CD4-positive, alpha-beta memory T cell (primary cell): ENCODE measurements at regions of chr17 and their contacts with region 1.

Region 1: DNA sequence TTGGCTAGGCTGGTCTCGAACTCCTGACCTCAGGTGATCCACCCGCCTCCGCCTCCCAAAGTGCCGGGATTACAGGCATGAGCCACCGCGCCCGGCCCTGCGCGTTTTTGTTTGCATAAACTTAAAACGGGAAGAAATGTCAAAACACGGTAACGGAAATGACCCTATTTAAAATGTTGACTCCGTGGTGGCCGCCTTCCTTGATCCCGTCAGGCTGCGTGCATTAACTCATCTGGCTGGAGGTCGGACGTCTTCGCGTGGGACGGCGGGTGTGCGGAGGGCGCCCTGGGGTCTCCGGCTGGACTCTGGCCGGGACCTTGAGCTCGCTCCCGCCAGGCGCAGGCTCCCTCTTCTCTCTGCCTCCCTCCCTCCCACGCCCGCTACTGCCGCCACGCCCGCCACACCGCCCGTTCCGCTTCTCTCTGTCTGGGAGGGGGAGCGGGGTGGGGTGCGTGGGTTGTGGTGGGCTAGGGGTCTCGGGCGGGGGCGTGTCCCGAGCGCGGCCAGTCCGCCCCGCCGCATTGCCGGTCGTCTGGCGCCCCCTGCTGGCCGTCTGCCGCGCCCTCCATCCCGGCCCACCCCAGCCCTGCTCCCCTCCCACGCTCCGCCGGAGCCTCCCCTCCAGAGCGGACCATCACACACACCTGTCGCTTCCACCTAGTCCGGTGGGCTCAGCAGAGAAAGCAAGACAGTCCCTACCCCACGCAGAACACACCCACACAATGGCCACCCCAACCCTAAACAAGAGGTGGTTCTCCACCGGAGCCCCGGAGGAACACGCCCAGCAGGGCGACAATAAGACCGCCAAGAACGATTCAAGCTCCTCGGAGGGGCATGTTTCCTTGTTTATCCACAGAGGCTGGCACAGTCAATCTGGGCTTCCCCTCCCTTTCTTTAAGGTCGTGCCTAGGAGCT is 1.2 kb upstream of the CCDC42 start:
- DNase-seq: peak; percentile 66 to 78 (median 70)
- H3K4me3 ChIP-seq: peak overlapping the region; percentile 34 to 72
- H3K4me3 Mint-ChIP-seq: peak overlapping the region; percentile 89 to 95 (median 91)
- H3K27ac ChIP-seq: peak overlapping the region; percentile 56
- H3K27ac Mint-ChIP-seq: peak overlapping the region; percentile 87 to 95 (median 91)
- H3K4me1 ChIP-seq: peaks cover 17% of the 10 kb centered on the region
- H3K4me1 Mint-ChIP-seq: peaks cover 9 to 23% (median 12%) of the 10 kb centered on the region in 4 donors
- H3K27me3 ChIP-seq: no peaks in the 10 kb centered on the region
- H3K27me3 Mint-ChIP-seq: no peaks in the 10 kb centered on the region

Region 2: DNA sequence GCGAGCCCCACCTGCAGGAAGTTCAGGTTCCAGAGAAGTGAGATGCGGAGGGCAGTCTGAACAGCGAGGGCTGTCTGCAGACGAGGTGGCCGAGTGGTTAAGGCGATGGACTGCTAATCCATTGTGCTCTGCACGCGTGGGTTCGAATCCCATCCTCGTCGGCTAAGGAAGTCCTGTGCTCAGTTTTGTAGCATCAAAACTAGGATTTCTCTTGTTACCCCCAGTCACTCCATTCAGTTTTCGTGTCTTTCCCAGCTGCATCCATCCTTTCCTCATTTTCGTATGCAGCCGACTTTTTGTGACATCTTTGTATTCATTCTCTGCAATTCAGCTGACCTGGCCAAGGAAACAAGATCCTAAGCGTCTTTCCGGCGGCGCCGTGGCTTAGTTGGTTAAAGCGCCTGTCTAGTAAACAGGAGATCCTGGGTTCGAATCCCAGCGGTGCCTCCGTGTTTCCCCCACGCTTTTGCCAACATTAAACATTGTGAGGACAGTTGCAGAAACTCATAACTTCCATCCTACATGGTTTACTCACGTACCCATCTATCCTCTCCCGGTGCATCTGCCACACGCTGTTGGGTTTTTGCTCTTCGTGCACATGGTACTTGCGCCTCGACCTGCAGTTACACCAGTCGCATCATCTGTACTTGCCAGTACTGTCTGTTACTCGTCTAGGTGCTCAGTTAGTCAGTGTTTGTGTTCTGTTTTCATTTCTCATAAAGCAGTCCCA is 558.9 kb before region 1 on chr17:
- CTCF ChIA-PET with region 1: no interaction called
- POLR2A ChIA-PET with region 1: no interaction called
- intact Hi-C with region 1: no loop called
- DNase-seq: peak; percentile 90 to 92 (median 91)
- H3K4me3 ChIP-seq: peak overlapping the region; percentile 90 to 100
- H3K4me3 Mint-ChIP-seq: no peak overlapping the region
- H3K27ac ChIP-seq: peak overlapping the region; percentile 82
- H3K27ac Mint-ChIP-seq: no peak overlapping the region
- H3K4me1 ChIP-seq: peaks cover 30% of the 10 kb centered on the region
- H3K4me1 Mint-ChIP-seq: peaks cover 16 to 26% (median 17%) of the 10 kb centered on the region in 4 donors
- H3K27me3 ChIP-seq: no peaks in the 10 kb centered on the region
- H3K27me3 Mint-ChIP-seq: no peaks in the 10 kb centered on the region

Region 3: GRCh38 chr17:8383143-8383822 is 362.6 kb before region 1 on chr17 and contains the start of gene RPL26:
- CTCF ChIA-PET with region 1: interaction called, 21 read pairs
- POLR2A ChIA-PET with region 1: interaction called, 8 read pairs
- intact Hi-C with region 1: loop called (anchors 1 kb)
- DNase-seq: peak; percentile 96 to 98 (median 97)
- H3K4me3 ChIP-seq: peak within 1 kb of the TSS; percentile 74 to 95
- H3K4me3 Mint-ChIP-seq: peak within 1 kb of the TSS; percentile 95 to 99 (median 97)
- H3K27ac ChIP-seq: peak within 1 kb of the TSS; percentile 77
- H3K27ac Mint-ChIP-seq: peak within 1 kb of the TSS; percentile 94 to 97 (median 96)
- H3K4me1 ChIP-seq: peaks cover 49% of the 10 kb centered on the region
- H3K4me1 Mint-ChIP-seq: peaks cover 36 to 82% (median 54%) of the 10 kb centered on the region in 4 donors
- H3K27me3 ChIP-seq: no peaks in the 10 kb centered on the region
- H3K27me3 Mint-ChIP-seq: no peaks in the 10 kb centered on the region
- total RNA-seq, gene RPL26: 2,761 to 2,878 TPM

Region 4: DNA sequence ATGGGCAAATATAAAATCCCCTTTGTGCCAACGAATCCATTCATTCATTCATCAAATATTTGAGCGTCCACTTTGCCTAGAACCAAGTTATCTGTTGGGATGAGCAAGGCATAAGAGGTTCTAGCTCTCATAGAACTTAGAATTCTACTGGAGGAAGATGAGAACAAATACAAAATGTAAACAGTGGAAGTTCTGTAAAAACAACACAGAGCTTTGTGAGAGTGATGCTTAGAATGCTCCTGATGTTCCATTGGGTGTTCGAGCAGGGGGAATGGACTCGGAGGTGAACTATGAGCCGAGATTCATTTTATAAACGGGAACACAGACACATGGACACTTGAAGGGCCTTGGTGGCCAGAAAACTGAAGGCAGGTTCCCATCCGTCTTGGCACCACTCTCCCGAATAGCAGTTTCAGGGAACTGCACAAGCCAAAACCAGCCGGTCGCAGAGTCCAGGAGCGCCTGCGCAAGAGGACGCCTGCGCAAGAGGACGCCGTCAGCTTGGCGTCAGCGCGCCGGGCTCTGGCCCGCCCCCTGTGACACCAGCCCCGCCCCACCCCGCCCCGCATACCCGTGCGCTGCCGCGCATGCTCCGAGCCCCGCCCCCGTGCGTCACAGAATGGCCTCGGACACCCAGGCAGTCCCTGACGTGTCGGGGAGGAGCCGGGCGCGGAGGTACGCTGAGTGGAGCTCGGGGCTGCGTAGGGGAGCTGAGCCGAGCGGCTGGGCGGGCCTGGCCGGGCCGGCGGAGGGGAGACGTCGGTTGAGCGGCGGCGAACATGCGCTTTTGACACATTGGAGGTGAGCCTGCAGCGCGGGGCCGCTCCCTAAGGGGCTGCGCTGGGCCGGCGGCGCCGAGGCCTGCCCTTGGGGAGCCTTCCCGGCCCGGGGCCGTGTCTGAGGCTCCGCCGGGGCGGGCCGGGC is 310.3 kb before region 1 on chr17 and contains the start of gene NDEL1:
- CTCF ChIA-PET with region 1: interaction called, 12 read pairs
- POLR2A ChIA-PET with region 1: interaction called, 6 read pairs
- intact Hi-C with region 1: no loop called
- DNase-seq: peak; percentile 98 to 99 (median 98)
- H3K4me3 ChIP-seq: peak within 1 kb of the TSS; percentile 87 to 95
- H3K4me3 Mint-ChIP-seq: peak within 1 kb of the TSS; percentile 94 to 99 (median 98)
- H3K27ac ChIP-seq: peak within 1 kb of the TSS; percentile 100
- H3K27ac Mint-ChIP-seq: peak within 1 kb of the TSS; percentile 96 to 100 (median 99)
- H3K4me1 ChIP-seq: peaks cover 40% of the 10 kb centered on the region
- H3K4me1 Mint-ChIP-seq: peaks cover 19 to 49% (median 31%) of the 10 kb centered on the region in 4 donors
- H3K27me3 ChIP-seq: no peaks in the 10 kb centered on the region
- H3K27me3 Mint-ChIP-seq: no peaks in the 10 kb centered on the region
- total RNA-seq, gene NDEL1: 115 to 120 TPM

Region 5: GRCh38 chr17:8599351-8600011 is 146.4 kb before region 1 on chr17:
- CTCF ChIA-PET with region 1: no interaction called
- POLR2A ChIA-PET with region 1: no interaction called
- intact Hi-C with region 1: no loop called
- DNase-seq: no peak
- H3K4me3 ChIP-seq: no peak overlapping the region
- H3K4me3 Mint-ChIP-seq: no peak overlapping the region
- H3K27ac ChIP-seq: no peak overlapping the region
- H3K27ac Mint-ChIP-seq: no peak overlapping the region
- H3K4me1 ChIP-seq: no peaks in the 10 kb centered on the region
- H3K4me1 Mint-ChIP-seq: no peaks in the 10 kb centered on the region
- H3K27me3 ChIP-seq: no peaks in the 10 kb centered on the region
- H3K27me3 Mint-ChIP-seq: peaks cover 0 to 3% of the 10 kb centered on the region in 2 donors

Region 6: DNA sequence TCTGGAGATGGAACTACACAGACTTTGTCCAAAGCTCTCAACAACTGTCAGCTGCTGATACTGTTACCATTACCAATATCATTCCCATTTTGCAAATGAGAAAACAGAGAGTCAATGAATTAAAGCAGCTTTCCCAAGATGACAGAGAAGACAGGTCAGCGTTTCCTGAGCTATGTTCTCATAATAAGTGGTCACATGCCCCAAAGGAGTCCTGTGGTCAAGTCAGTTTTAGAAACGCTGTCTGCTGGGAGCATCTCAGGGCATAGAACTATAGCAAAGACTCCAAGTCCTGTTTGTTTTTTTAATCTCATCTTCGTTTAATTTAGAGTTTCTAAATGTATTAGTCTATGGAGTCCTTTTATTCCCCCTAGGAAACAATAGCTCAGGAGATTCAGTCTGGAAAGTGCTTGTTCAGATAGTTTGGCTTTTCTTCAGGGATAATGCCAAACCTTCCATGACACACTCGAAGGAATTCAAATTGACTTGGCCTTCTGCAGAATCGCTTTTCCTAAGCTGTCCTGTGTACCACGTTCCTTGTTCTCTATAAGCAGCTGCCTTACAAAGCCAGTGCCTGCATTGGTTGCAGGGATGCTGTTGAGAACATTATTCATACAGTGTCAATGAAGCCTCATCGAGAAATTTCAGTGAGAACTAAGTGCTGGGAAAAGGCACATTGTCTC is 13.3 kb before region 1 on chr17:
- CTCF ChIA-PET with region 1: interaction called, 10 read pairs
- POLR2A ChIA-PET with region 1: no interaction called
- intact Hi-C with region 1: no loop called
- DNase-seq: no peak
- H3K4me3 ChIP-seq: no peak overlapping the region
- H3K4me3 Mint-ChIP-seq: no peak overlapping the region
- H3K27ac ChIP-seq: no peak overlapping the region
- H3K27ac Mint-ChIP-seq: no peak overlapping the region
- H3K4me1 ChIP-seq: no peaks in the 10 kb centered on the region
- H3K4me1 Mint-ChIP-seq: no peaks in the 10 kb centered on the region
- H3K27me3 ChIP-seq: no peaks in the 10 kb centered on the region
- H3K27me3 Mint-ChIP-seq: peaks cover 3 to 9% of the 10 kb centered on the region in 2 donors